Thyroid gland (tissue), 4 donors: ENCODE measurements at regions of chr11 and their contacts with region 1.

Region 1: GRCh38 chr11:111841370-111842053 is 29.9 kb downstream of the ALG9 start:
- DNase-seq: peak; percentile 89 to 94
- H3K4me3 ChIP-seq: no peak overlapping the region
- H3K27ac ChIP-seq: peak overlapping the region in 2 of 3 donors; percentile 17 to 21
- H3K4me1 ChIP-seq: peaks cover 0 to 6% of the 10 kb centered on the region in 2 donors
- H3K27me3 ChIP-seq: no peaks in the 10 kb centered on the region
- CTCF ChIP-seq: peak; percentile 75 to 93 (median 84)
- POLR2A ChIP-seq: no peak

Region 2: DNA sequence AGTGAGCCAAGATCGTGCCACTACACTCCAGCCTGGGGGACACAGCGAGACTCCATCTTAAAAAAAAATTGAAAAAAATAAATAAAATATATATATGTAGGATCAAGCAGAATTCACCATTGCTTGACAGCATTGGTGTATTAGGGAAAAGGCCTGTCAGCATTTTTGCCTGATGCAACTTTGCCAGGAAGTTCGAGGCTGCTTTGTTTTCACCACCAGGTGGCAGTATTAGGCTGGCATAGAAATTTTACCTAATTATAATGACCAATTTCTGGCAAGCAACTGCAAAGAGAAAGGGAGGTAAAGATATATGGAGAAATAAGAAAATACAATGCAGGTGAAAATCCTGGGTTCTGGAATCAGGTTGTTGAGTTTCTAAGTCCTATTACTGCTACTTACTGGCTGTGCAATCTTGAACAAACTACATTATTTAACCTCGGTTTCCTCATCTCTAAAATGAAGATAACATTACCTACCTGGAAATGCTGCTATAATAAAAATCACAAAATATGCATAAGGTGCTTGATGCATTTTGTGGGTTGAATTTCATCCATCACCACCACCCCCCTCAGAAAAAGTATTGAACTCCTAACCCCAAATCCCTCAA is 276.3 kb before region 1 on chr11:
- intact Hi-C with region 1: loop called (anchors 10 kb)
- DNase-seq: peak; percentile 62 to 66
- H3K4me3 ChIP-seq: no peak overlapping the region
- H3K27ac ChIP-seq: no peak overlapping the region
- H3K4me1 ChIP-seq: peaks cover 0 to 5% of the 10 kb centered on the region in 2 donors
- H3K27me3 ChIP-seq: no peaks in the 10 kb centered on the region
- CTCF ChIP-seq: peak; percentile 69 to 87 (median 73)
- POLR2A ChIP-seq: no peak